Endothelial cell of umbilical vein (primary cell): ENCODE measurements at regions of chr1 and their contacts with region 1.

Region 1: DNA sequence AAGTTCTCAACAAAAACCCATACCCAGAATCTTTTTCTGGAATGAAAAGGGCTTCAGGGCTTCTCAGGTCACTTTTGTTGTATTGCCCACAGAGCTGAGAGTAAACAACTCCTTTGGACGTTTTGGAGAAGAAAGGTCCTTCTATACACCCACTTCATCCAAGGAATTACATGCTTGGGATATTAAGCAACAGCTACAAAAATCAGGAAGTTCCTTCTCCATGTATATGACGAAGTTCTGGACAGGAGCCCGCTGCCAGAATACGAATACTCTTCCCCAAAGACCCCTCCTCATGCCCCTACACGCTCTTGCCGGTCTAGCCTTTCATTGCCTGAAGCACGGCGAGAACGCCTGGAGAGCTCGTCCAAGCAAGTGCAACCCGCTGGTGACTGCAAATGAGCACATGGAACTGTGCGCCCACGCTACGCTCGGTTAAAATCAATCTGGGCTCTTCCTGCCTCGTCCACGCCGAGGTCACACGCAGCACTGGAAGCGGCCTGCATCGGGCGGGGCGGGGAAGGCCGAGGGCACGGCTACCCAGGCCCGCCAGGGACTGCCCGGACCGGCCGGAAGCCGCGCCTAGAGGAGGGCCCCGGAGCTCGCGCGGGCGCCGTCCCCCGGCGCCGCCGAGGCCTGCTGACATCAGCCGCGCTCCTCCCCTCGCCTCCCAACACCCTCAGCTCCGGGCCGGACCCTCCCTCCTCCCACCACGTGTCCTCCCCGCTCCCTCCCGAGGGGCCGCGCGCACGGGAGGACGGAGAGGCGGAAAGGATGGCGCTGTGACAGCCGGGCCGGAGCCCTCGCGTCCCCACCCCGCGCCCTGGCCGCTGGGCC is at the start of gene POGK:
- DNase-seq: peak; percentile 90
- H3K4me3 ChIP-seq: peak within 1 kb of the TSS; percentile 35 to 63 (median 54)
- H3K27ac ChIP-seq: peak within 1 kb of the TSS; percentile 14
- H3K4me1 ChIP-seq: peaks cover 18% of the 10 kb centered on the region
- H3K27me3 ChIP-seq: no peaks in the 10 kb centered on the region
- CTCF ChIP-seq: no peak
- POLR2A ChIP-seq: peak; percentile 81
- total RNA-seq, gene POGK: 31.8 and 32.2 TPM in 2 replicates

Region 2: GRCh38 chr1:166740668-166741276 is 98.2 kb before region 1 on chr1:
- CTCF ChIA-PET with region 1: no interaction called
- POLR2A ChIA-PET with region 1: no interaction called
- dilution Hi-C with region 1: no loop called
- intact Hi-C with region 1: no loop called
- DNase-seq: no peak
- H3K4me3 ChIP-seq: no peak overlapping the region
- H3K27ac ChIP-seq: no peak overlapping the region
- H3K4me1 ChIP-seq: no peaks in the 10 kb centered on the region
- H3K27me3 ChIP-seq: no peaks in the 10 kb centered on the region
- CTCF ChIP-seq: no peak
- POLR2A ChIP-seq: no peak

Region 3: DNA sequence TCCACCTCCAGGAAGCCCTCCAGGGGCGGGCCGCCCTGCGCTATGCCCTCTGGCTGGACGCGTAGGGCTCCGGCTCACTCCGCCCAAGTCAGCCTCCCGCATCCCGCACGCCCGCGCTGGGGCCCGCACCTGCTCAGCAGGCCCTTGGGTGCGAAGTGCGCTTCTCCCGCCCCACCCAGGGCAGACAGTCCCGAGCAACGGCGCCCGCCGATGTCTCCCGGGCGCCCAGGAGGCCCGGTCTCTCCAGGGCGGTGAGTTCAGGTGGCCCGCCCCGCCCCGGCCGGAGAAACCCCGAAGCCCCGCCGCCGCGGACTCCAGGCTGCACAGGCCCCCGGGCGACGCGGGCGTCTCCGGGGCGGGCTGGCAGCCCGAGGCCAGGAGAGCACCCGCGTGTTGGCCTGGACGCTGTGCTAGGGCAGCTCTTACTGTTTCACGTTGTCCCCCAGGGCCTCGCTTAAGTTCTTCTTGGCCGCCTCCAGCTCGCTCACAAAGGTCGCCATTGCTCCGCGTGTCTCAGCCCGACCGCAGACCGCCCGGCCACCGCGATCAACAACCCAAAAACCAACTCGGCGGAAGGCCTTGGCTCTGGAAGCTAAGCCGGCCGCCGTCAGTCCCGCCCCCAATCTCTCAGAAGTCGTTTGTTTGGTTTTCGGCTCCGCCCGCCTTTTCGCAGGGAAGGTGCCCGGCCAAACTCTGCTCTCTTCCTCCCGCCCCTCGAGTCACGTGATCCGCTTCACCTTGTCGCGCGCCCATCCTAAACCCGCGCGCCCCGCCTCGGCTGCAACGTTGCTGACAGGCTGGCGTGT is 37.0 kb after region 1 on chr1 and contains the start of gene TADA1:
- CTCF ChIA-PET with region 1: interaction called, 6 read pairs
- POLR2A ChIA-PET with region 1: interaction called, 4 read pairs
- dilution Hi-C with region 1: no loop called
- intact Hi-C with region 1: loop called (anchors 1 kb)
- DNase-seq: peak; percentile 98
- H3K4me3 ChIP-seq: peak within 1 kb of the TSS; percentile 2 to 63 (median 53)
- H3K27ac ChIP-seq: peak within 1 kb of the TSS; percentile 47
- H3K4me1 ChIP-seq: peaks cover 10% of the 10 kb centered on the region
- H3K27me3 ChIP-seq: no peaks in the 10 kb centered on the region
- CTCF ChIP-seq: peak in 1 of 2 donors; percentile 22
- POLR2A ChIP-seq: peak; percentile 72
- total RNA-seq, gene TADA1: 7.0 and 7.5 TPM in 2 replicates